ENCODE measurements at regions of chr3 and their contacts with region 1.

Region 1: DNA sequence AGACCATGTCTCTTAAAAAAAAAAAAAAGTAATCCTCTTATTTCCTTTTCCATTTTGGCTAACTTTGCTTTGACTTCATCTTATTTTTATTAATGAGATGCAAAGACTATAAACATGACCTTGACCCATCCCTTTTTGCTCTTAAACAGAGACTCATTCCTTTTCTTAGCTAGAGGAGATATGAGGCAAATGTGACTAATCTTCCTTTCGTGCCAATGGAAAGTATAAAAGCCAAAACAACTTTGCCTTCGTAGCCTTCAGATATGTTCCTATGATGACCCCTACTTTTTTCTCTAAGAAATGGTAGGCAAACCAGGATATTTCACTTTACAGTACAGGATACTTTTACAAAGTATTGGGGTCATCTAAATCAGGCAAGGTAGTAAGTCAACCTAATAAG is 36.9 kb upstream of the GOLGB1 start:
- DNase-seq: no peak

Region 2: GRCh38 chr3:122255757-122256439 is 469.4 kb after region 1 on chr3:
- CTCF ChIA-PET with region 1: interaction called, 13 read pairs
- POLR2A ChIA-PET with region 1: no interaction called
- DNase-seq: no peak